Aorta (tissue), 5 donors: ENCODE measurements at regions of chr12 and their contacts with region 1.

Region 1: GRCh38 chr12:67355578-67356379 is 86.6 kb downstream of the CAND1 start:
- DNase-seq: no peak
- ATAC-seq: peak; percentile 80
- H3K4me3 ChIP-seq: no peak overlapping the region
- H3K27ac ChIP-seq: no peak overlapping the region
- H3K4me1 ChIP-seq: peaks cover 0 to 3% of the 10 kb centered on the region in 2 donors
- H3K27me3 ChIP-seq: no peaks in the 10 kb centered on the region

Region 2: GRCh38 chr12:67943226-67943892 is 587.6 kb after region 1 on chr12:
- intact Hi-C with region 1: loop called (anchors 2 to 5 kb)
- DNase-seq: peak in 1 of 2 donors; percentile 54
- ATAC-seq: peak; percentile 90
- H3K4me3 ChIP-seq: no peak overlapping the region
- H3K27ac ChIP-seq: no peak overlapping the region
- H3K4me1 ChIP-seq: no peaks in the 10 kb centered on the region
- H3K27me3 ChIP-seq: no peaks in the 10 kb centered on the region